GM12878 (cell line): ENCODE measurements at regions of chr1 and their contacts with region 1.

Region 1: DNA sequence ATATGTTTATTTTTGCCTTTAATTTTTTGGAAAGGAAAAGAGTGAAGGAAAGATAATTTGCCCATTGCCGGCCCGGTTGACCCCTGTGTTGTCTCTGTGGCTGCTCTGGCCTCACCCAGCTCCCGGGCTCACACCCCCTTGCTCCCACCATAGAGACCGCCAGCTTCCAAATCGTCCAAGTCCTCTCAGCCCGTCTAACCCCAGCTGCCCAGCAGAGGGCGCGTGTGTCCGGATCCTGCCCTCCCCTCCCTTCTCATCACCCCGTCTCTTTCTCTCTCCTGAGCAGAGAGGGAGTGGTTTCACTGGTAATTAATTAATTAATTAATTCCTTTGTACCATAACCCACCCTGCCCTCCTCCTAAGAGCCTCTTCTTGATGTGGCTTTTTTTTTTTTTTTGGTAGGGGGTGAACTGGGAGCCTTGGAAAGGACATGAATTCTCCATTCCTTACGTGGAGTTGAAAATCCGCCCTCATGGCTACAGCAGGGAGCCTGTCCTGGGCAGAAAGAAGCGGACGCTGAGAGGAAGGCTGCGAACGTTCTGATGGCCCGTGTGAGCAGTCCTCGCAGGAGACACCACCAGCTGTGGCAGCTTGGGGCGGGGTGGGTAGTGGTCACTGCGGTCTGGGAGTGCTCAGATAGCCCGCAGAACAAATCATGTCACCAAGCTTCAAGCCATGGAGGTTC is 45.9 kb downstream of the KIAA0040 start:
- DNase-seq: no peak
- ATAC-seq: peak; percentile 80
- H3K4me3 ChIP-seq: no peak overlapping the region
- H3K27ac ChIP-seq: no peak overlapping the region
- H3K4me1 ChIP-seq: peaks cover 11% of the 10 kb centered on the region
- H3K27me3 ChIP-seq: peaks cover 0 to 2% of the 10 kb centered on the region in 2 experiments; a peak in 2 of 4 replicates
- CTCF ChIP-seq: peak; percentile 86 to 94 (median 87)
- EP300 ChIP-seq: no peak
- POLR2A ChIP-seq: no peak
- RAD21 ChIP-seq: peak; percentile 60

Region 2: GRCh38 chr1:175023043-175023921 is 123.4 kb before region 1 on chr1 and contains the start of gene MRPS14:
- CTCF ChIA-PET with region 1: interaction called, 139 read pairs
- POLR2A ChIA-PET with region 1: interaction called, 10 read pairs
- RAD21 ChIA-PET with region 1: interaction called, 26 read pairs
- SMC1A ChIA-PET with region 1: interaction called, 12 read pairs
- in situ Hi-C with region 1: loop called (anchors 5 kb)
- intact Hi-C with region 1: no loop called
- DNase-seq: peak; percentile 95
- ATAC-seq: peak; percentile 98
- H3K4me3 ChIP-seq: peak within 1 kb of the TSS; percentile 89
- H3K27ac ChIP-seq: peak within 1 kb of the TSS; percentile 90
- H3K4me1 ChIP-seq: no peaks in the 10 kb centered on the region; the same call in 1 of the 2 replicates
- H3K27me3 ChIP-seq: no peaks in the 10 kb centered on the region
- CTCF ChIP-seq: no peak
- EP300 ChIP-seq: no peak
- POLR2A ChIP-seq: peak; percentile 90
- RAD21 ChIP-seq: no peak
- polyA plus RNA-seq, gene MRPS14: 223 to 224 TPM

Region 3: GRCh38 chr1:175124861-175125260 is 21.8 kb before region 1 on chr1:
- CTCF ChIA-PET with region 1: interaction called, 135 read pairs
- POLR2A ChIA-PET with region 1: no interaction called
- RAD21 ChIA-PET with region 1: interaction called, 27 read pairs
- SMC1A ChIA-PET with region 1: interaction called, 23 read pairs
- in situ Hi-C with region 1: no loop called
- intact Hi-C with region 1: no loop called
- DNase-seq: no peak
- ATAC-seq: no peak
- H3K4me3 ChIP-seq: no peak overlapping the region
- H3K27ac ChIP-seq: no peak overlapping the region
- H3K4me1 ChIP-seq: no peaks in the 10 kb centered on the region
- H3K27me3 ChIP-seq: no peaks in the 10 kb centered on the region
- CTCF ChIP-seq: no peak
- EP300 ChIP-seq: no peak
- POLR2A ChIP-seq: no peak
- RAD21 ChIP-seq: no peak

Region 4: GRCh38 chr1:175129997-175130648 is 16.5 kb before region 1 on chr1:
- CTCF ChIA-PET with region 1: interaction called, 135 read pairs
- POLR2A ChIA-PET with region 1: interaction called, 3 read pairs
- RAD21 ChIA-PET with region 1: interaction called, 27 read pairs
- SMC1A ChIA-PET with region 1: interaction called, 23 read pairs
- in situ Hi-C with region 1: no loop called
- intact Hi-C with region 1: no loop called
- DNase-seq: no peak
- ATAC-seq: no peak; the same call in 2 of the 3 replicates
- H3K4me3 ChIP-seq: no peak overlapping the region
- H3K27ac ChIP-seq: no peak overlapping the region
- H3K4me1 ChIP-seq: peaks cover 28% of the 10 kb centered on the region
- H3K27me3 ChIP-seq: no peaks in the 10 kb centered on the region
- CTCF ChIP-seq: no peak
- EP300 ChIP-seq: no peak
- POLR2A ChIP-seq: no peak
- RAD21 ChIP-seq: no peak

Region 5: GRCh38 chr1:175162955-175163354 is 16.3 kb after region 1 on chr1:
- CTCF ChIA-PET with region 1: interaction called, 17 read pairs
- POLR2A ChIA-PET with region 1: no interaction called
- RAD21 ChIA-PET with region 1: interaction called, 5 read pairs
- SMC1A ChIA-PET with region 1: interaction called, 7 read pairs
- in situ Hi-C with region 1: no loop called
- intact Hi-C with region 1: no loop called
- DNase-seq: no peak
- ATAC-seq: no peak
- H3K4me3 ChIP-seq: no peak overlapping the region
- H3K27ac ChIP-seq: no peak overlapping the region
- H3K4me1 ChIP-seq: no peaks in the 10 kb centered on the region
- H3K27me3 ChIP-seq: no peaks in the 10 kb centered on the region
- CTCF ChIP-seq: no peak
- EP300 ChIP-seq: no peak
- POLR2A ChIP-seq: no peak
- RAD21 ChIP-seq: no peak

Region 6: GRCh38 chr1:175331891-175332290 is 185.2 kb after region 1 on chr1:
- CTCF ChIA-PET with region 1: interaction called, 129 read pairs
- POLR2A ChIA-PET with region 1: no interaction called
- RAD21 ChIA-PET with region 1: interaction called, 16 read pairs
- SMC1A ChIA-PET with region 1: interaction called, 11 read pairs
- in situ Hi-C with region 1: no loop called
- intact Hi-C with region 1: no loop called
- DNase-seq: no peak
- ATAC-seq: no peak
- H3K4me3 ChIP-seq: no peak overlapping the region
- H3K27ac ChIP-seq: no peak overlapping the region
- H3K4me1 ChIP-seq: no peaks in the 10 kb centered on the region
- H3K27me3 ChIP-seq: peaks cover 2 to 4% of the 10 kb centered on the region in 2 experiments; a peak in 2 of 4 replicates
- CTCF ChIP-seq: no peak
- EP300 ChIP-seq: no peak
- POLR2A ChIP-seq: no peak
- RAD21 ChIP-seq: no peak

Region 7: DNA sequence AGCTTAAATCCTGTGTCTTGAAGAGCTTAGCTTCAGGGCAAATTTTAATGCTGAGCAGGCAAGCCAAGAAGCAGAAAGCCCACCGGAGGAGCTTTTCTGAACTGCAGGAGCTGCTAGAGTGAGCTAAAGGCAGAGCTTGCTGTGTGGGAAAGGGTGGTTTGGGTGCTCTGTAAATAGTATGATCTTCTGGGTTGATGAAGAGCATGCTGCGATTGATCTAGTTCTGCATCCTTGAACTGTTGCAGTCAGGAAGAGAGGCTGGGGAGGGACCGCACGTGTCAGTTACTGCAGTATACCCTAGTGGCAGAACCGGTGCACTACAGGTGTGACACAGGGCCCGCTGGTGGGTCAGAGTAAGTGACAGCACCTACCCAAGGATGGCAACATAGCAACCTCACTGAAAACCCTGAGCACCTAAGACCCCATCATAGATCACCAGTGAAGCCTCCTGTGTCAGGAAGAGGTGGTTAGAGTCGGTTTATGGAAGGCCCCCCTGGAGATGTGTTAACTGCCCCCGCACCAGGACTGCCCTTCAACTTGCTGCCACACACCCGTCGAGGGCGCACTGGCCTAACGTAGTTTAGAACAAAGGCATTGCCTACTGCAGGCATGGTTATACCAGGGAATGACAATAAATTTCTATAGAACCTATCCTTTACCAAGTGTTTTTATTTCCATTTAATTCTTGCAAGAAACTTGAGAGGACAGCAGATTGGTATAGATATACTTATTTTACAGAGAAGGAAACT is 191.9 kb after region 1 on chr1:
- CTCF ChIA-PET with region 1: interaction called, 129 read pairs
- POLR2A ChIA-PET with region 1: no interaction called
- RAD21 ChIA-PET with region 1: interaction called, 16 read pairs
- SMC1A ChIA-PET with region 1: interaction called, 11 read pairs
- in situ Hi-C with region 1: no loop called
- intact Hi-C with region 1: no loop called
- DNase-seq: no peak
- ATAC-seq: peak; percentile 99
- H3K4me3 ChIP-seq: no peak overlapping the region
- H3K27ac ChIP-seq: no peak overlapping the region
- H3K4me1 ChIP-seq: no peaks in the 10 kb centered on the region
- H3K27me3 ChIP-seq: peaks cover 2 to 7% of the 10 kb centered on the region in 2 experiments; a peak in 3 of 4 replicates
- CTCF ChIP-seq: peak; percentile 40 to 80 (median 74)
- EP300 ChIP-seq: no peak
- POLR2A ChIP-seq: no peak
- RAD21 ChIP-seq: no peak